Heart left ventricle (tissue), 16 donors: ENCODE measurements at regions of chr14 and their contacts with region 1.

Region 1: GRCh38 chr14:50756300-50756699 is 74.7 kb downstream of the NIN start:
- DNase-seq: no peak
- ATAC-seq: peak in 1 of 4 donors; percentile 45
- H3K4me3 ChIP-seq: no peak overlapping the region
- H3K27ac ChIP-seq: no peak overlapping the region
- H3K4me1 ChIP-seq: no peaks in the 10 kb centered on the region
- H3K27me3 ChIP-seq: no peaks in the 10 kb centered on the region
- CTCF ChIP-seq: no peak
- POLR2A ChIP-seq: no peak

Region 2: GRCh38 chr14:50631408-50631821 is 124.9 kb before region 1 on chr14:
- intact Hi-C with region 1: loop called in 1 of 10 experiments (anchors 5 kb)
- DNase-seq: no peak
- ATAC-seq: no peak
- H3K4me3 ChIP-seq: no peak overlapping the region
- H3K27ac ChIP-seq: no peak overlapping the region
- H3K4me1 ChIP-seq: peaks cover 0 to 10% (median 0%) of the 10 kb centered on the region in 12 donors
- H3K27me3 ChIP-seq: no peaks in the 10 kb centered on the region
- CTCF ChIP-seq: no peak
- POLR2A ChIP-seq: no peak

Region 3: GRCh38 chr14:50741571-50741970 is 14.7 kb before region 1 on chr14:
- intact Hi-C with region 1: loop called in 1 of 10 experiments (anchors 2 kb)
- DNase-seq: no peak
- ATAC-seq: no peak
- H3K4me3 ChIP-seq: no peak overlapping the region
- H3K27ac ChIP-seq: no peak overlapping the region
- H3K4me1 ChIP-seq: peaks cover 0 to 31% (median 13%) of the 10 kb centered on the region in 12 donors
- H3K27me3 ChIP-seq: no peaks in the 10 kb centered on the region
- CTCF ChIP-seq: no peak
- POLR2A ChIP-seq: no peak

Region 4: GRCh38 chr14:50813544-50813863 is 57.2 kb after region 1 on chr14:
- intact Hi-C with region 1: no loop called
- DNase-seq: no peak
- ATAC-seq: no peak
- H3K4me3 ChIP-seq: peak overlapping the region in 1 of 12 donors; percentile 29
- H3K27ac ChIP-seq: peak overlapping the region in 1 of 12 donors; percentile 85
- H3K4me1 ChIP-seq: peaks cover 0 to 48% (median 10%) of the 10 kb centered on the region in 12 donors
- H3K27me3 ChIP-seq: no peaks in the 10 kb centered on the region
- CTCF ChIP-seq: no peak
- POLR2A ChIP-seq: no peak